ENCODE measurements at regions of chr2 and their contacts with region 1.

Region 1: GRCh38 chr2:182715896-182716668 is at the start of gene DNAJC10:
- DNase-seq: peak; percentile 89 to 92
- ATAC-seq: peak; percentile 96 to 99 (median 98)
- H3K4me3 ChIP-seq: peak within 1 kb of the TSS; percentile 78 to 98 (median 92)
- H3K27ac ChIP-seq: peak within 1 kb of the TSS; percentile 70 to 93 (median 86)
- H3K4me1 ChIP-seq: peaks cover 0 to 48% (median 24%) of the 10 kb centered on the region in 9 donors
- H3K27me3 ChIP-seq: no peaks in the 10 kb centered on the region
- CTCF ChIP-seq: no peak
- total RNA-seq, gene DNAJC10: 37.6 to 63.7 (median 57.5) TPM

Region 2: GRCh38 chr2:182666674-182667314 is 49.3 kb before region 1 on chr2:
- intact Hi-C with region 1: loop called in 1 of 10 experiments (anchors 5 kb)
- DNase-seq: no peak
- ATAC-seq: peak in 2 of 8 donors; percentile 29 to 33
- H3K4me3 ChIP-seq: no peak overlapping the region
- H3K27ac ChIP-seq: no peak overlapping the region
- H3K4me1 ChIP-seq: peaks cover 0 to 5% (median 0%) of the 10 kb centered on the region in 9 donors
- H3K27me3 ChIP-seq: no peaks in the 10 kb centered on the region
- CTCF ChIP-seq: peak in 6 of 9 donors; percentile 37 to 59 (median 50)

Region 3: GRCh38 chr2:183105402-183106134 is 389.5 kb after region 1 on chr2:
- intact Hi-C with region 1: no loop called
- DNase-seq: no peak
- ATAC-seq: no peak
- H3K4me3 ChIP-seq: no peak overlapping the region
- H3K27ac ChIP-seq: no peak overlapping the region
- H3K4me1 ChIP-seq: no peaks in the 10 kb centered on the region
- H3K27me3 ChIP-seq: no peaks in the 10 kb centered on the region
- CTCF ChIP-seq: no peak

Measured in heart right ventricle (tissue), 16 donors.